Thyroid gland (tissue), 4 donors: ENCODE measurements at regions of chr9 and their contacts with region 1.

Region 1: DNA sequence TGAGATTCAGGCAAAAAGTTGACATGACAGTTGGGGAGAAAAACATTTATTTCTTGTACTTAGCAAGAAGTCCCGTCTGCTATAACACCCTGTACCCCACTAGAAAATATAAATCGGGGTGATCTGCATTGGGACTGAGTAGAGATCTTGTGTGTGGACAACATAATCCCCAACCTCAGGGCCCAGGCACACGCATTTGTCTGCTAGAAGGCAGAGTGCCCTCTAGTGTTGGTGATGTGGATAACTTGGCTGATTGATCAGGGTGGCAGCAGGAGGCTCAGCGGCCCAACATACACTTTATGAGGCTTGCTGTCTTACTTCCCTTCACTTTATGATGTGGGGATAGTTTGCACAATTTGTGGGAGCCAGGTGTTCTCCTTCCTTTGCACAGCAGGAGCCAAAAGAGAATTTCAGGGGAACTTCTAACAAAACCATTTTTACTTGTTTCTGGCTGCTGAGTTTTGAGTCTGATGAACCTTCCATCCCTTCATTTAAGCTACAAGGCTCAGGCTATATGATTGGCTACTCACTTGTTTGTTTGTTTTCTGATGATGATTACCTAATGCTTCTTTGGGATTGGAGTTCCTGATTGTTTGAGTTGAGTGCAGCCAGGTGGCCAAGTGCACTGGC is 263.2 kb downstream of the DMAC1 start:
- DNase-seq: peak; percentile 62 to 68
- H3K4me3 ChIP-seq: no peak overlapping the region
- H3K27ac ChIP-seq: no peak overlapping the region
- H3K4me1 ChIP-seq: no peaks in the 10 kb centered on the region
- H3K27me3 ChIP-seq: no peaks in the 10 kb centered on the region
- CTCF ChIP-seq: peak in 5 of 6 experiments; percentile 30 to 77 (median 72)
- POLR2A ChIP-seq: no peak

Region 2: DNA sequence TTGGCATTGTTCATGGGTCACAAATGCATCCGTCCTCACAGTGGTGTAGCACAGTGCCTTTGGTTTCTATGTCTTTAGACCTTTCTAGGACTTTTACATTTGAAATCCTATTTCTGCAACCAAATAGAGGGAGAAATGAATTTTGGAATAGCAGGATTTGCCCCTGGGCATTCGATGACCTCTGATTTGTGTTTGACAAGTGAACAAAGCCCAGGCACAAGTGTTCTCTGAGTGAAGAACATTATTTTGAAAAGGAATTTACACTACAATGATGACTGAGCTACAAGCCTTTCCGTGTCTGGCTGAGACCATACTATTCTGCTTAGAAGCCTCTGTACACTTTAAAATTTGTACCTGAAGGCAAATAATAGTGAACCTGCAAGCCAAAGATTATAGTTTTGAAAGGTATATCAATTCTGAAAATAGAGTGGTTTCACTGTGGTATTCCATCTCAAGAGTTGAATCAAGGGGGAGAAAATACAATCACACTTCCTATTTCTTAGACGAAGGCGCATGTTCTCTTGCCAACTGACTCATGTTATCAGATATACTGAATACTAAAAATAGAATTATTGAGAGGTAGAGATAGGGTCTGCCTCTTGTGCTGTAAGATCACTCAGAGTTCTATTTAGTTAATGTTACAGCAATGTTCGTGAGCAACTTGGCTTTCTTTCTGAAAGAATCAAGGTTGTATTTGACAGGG is 481.1 kb before region 1 on chr9:
- intact Hi-C with region 1: loop called (anchors 10 kb)
- DNase-seq: no peak
- H3K4me3 ChIP-seq: no peak overlapping the region
- H3K27ac ChIP-seq: no peak overlapping the region
- H3K4me1 ChIP-seq: no peaks in the 10 kb centered on the region
- H3K27me3 ChIP-seq: no peaks in the 10 kb centered on the region
- CTCF ChIP-seq: no peak
- POLR2A ChIP-seq: no peak

Region 3: GRCh38 chr9:7067169-7067568 is 469.3 kb before region 1 on chr9:
- intact Hi-C with region 1: no loop called
- DNase-seq: no peak
- H3K4me3 ChIP-seq: no peak overlapping the region
- H3K27ac ChIP-seq: no peak overlapping the region
- H3K4me1 ChIP-seq: peaks cover 3% of the 10 kb centered on the region in 2 donors
- H3K27me3 ChIP-seq: no peaks in the 10 kb centered on the region
- CTCF ChIP-seq: no peak
- POLR2A ChIP-seq: no peak

Region 4: GRCh38 chr9:7402334-7403027 is 133.9 kb before region 1 on chr9:
- intact Hi-C with region 1: loop called (anchors 5 kb)
- DNase-seq: no peak
- H3K4me3 ChIP-seq: no peak overlapping the region
- H3K27ac ChIP-seq: no peak overlapping the region
- H3K4me1 ChIP-seq: peaks cover 0 to 4% of the 10 kb centered on the region in 2 donors
- H3K27me3 ChIP-seq: no peaks in the 10 kb centered on the region
- CTCF ChIP-seq: no peak
- POLR2A ChIP-seq: no peak

Region 5: GRCh38 chr9:7452378-7452777 is 84.0 kb before region 1 on chr9:
- intact Hi-C with region 1: no loop called
- DNase-seq: no peak
- H3K4me3 ChIP-seq: no peak overlapping the region
- H3K27ac ChIP-seq: no peak overlapping the region
- H3K4me1 ChIP-seq: no peaks in the 10 kb centered on the region
- H3K27me3 ChIP-seq: no peaks in the 10 kb centered on the region
- CTCF ChIP-seq: no peak
- POLR2A ChIP-seq: no peak

Region 6: GRCh38 chr9:7613931-7614330 is 77.5 kb after region 1 on chr9:
- intact Hi-C with region 1: no loop called
- DNase-seq: no peak
- H3K4me3 ChIP-seq: no peak overlapping the region
- H3K27ac ChIP-seq: no peak overlapping the region
- H3K4me1 ChIP-seq: no peaks in the 10 kb centered on the region
- H3K27me3 ChIP-seq: no peaks in the 10 kb centered on the region
- CTCF ChIP-seq: no peak
- POLR2A ChIP-seq: no peak